Aorta (tissue), 5 donors: ENCODE measurements at regions of chr12 and their contacts with region 1.

Region 1: DNA sequence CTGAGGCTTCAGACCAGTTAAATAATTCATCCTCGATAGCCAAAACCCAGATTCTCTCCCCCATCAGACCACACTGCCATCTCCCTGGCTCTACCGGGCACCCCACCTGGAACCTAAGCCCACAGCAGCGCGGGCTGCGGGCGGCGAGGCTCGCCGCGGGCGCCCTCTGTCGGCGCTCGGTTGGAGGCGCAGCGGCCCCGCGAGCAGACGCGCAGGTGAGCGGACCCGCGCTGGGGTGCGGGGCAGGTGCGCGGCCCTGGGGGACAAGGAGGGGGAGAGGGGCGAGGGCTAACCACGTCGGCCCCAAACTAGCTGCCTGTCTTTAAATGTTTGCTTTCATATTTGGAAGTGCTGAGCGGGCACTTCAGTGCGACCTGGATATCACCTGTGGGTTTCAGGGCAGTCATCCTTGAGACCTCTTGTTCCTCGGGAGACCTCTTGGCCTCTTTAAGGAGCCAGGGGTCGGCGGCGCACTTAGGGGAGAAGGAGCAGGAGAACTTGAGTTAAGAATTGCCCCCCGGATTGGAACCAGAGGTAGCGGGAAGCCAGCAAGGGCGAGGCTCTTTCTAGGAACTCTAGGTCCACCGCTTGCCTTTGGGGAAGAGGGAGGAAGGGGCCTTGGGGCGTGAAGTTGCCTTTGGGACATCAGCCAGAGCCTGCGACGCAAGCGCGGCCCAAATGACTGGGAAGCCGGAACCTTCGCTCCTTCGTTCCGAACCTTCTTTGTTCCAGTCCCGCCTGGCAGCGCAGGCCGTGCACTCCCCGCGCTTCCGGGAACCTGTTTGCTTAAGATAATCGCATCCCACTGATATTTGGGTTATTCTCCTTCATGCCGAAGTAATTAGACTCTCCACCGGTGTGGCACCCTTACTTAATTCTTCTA is 78.7 kb downstream of the NEDD1 start:
- DNase-seq: peak in 1 of 2 donors; percentile 76
- ATAC-seq: peak; percentile 83
- H3K4me3 ChIP-seq: peak overlapping the region; percentile 27 to 59
- H3K27ac ChIP-seq: no peak overlapping the region
- H3K4me1 ChIP-seq: peaks cover 0 to 4% of the 10 kb centered on the region in 2 donors
- H3K27me3 ChIP-seq: no peaks in the 10 kb centered on the region

Region 2: GRCh38 chr12:96587691-96588090 is 398.0 kb before region 1 on chr12:
- intact Hi-C with region 1: loop called in 1 of 2 experiments (anchors 10 kb)
- DNase-seq: no peak
- ATAC-seq: no peak
- H3K4me3 ChIP-seq: no peak overlapping the region
- H3K27ac ChIP-seq: no peak overlapping the region
- H3K4me1 ChIP-seq: no peaks in the 10 kb centered on the region
- H3K27me3 ChIP-seq: no peaks in the 10 kb centered on the region

Region 3: GRCh38 chr12:97308576-97309198 is 323.0 kb after region 1 on chr12:
- intact Hi-C with region 1: loop called (anchors 2 to 5 kb)
- DNase-seq: no peak
- ATAC-seq: no peak
- H3K4me3 ChIP-seq: no peak overlapping the region
- H3K27ac ChIP-seq: no peak overlapping the region
- H3K4me1 ChIP-seq: no peaks in the 10 kb centered on the region
- H3K27me3 ChIP-seq: peaks cover 0 to 1% of the 10 kb centered on the region in 2 donors

Region 4: DNA sequence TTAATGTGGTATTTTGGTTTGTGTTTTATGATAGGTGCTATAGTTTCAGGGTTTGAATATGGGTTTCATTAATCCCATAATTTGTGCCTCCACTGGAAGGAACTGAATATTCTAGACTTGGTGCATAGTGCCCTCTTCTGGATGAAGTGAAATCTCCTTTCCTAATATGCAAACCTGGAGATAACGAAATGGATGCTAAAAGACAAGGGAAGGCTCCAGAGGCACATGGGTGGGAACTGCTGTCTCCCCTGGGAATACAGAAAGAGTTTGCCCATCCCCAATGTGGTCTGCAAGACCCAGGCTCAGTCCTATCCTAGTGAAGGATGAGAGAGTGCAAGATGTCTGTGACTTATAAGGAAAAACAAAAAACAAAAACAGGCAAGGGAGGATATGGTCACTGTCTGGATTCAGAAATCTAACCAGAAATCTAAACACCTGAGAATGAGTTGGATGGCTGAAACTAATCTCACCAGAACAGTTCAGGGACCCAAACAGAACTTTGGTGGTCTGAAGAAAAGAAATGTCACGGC is 1387.4 kb after region 1 on chr12:
- intact Hi-C with region 1: loop called in 1 of 2 experiments (anchors 10 kb)
- DNase-seq: no peak
- ATAC-seq: no peak
- H3K4me3 ChIP-seq: no peak overlapping the region
- H3K27ac ChIP-seq: no peak overlapping the region
- H3K4me1 ChIP-seq: peaks cover 0 to 3% of the 10 kb centered on the region in 2 donors
- H3K27me3 ChIP-seq: no peaks in the 10 kb centered on the region